IMR-90 (cell line): ENCODE measurements at regions of chr2 and their contacts with region 1.

Region 1: DNA sequence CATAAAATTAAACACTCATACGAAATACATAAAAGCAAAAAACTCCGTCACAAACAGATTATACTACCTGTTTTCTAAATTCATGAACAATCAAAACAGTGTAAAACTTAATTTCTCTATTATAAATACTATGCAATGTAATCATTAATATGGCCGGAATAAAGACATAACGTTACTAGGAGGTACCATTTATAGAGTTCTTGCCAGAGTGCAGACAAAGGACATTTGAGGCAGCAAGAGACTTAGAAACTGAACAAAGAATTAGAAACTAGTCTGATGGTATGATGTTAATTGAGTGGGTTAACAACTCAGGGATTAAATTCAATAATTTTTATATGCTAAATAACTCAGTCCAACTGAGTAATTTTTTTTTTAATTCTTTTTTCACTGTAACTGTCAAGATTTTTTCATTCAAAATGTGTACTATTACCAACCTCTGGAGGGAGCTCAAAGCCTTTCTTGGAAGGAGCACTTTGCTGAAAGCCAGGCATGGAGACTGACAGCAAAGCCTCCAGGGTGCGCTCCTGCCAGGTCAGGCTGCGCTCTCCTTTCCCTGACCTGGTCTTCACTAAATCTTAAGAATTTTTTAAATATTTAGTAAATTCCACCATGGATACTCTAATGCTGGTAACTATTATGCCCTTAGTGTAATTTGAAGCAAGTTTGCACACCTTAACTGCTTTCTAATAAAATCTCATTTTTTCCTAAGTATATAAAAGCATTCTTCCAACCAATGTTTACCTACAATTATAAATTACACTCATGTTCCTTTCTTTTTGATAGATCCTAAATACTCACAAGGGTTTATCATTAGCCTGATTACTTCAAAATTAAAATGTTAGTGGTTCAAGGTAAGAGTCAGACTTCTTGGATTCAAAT is 34.1 kb downstream of the WDR35 start:
- DNase-seq: peak; percentile 77
- ATAC-seq: peak; percentile 99
- H3K4me3 ChIP-seq: no peak overlapping the region
- H3K27ac ChIP-seq: no peak overlapping the region
- H3K4me1 ChIP-seq: no peaks in the 10 kb centered on the region
- H3K27me3 ChIP-seq: no peaks in the 10 kb centered on the region
- CTCF ChIP-seq: peak; percentile 99
- POLR2A ChIP-seq: 0 out of 2 replicates have a peak, but pooled peaks have one; percentile 37
- RAD21 ChIP-seq: peak; percentile 93

Region 2: GRCh38 chr2:19863303-19864041 is 92.3 kb before region 1 on chr2:
- CTCF ChIA-PET with region 1: no interaction called
- POLR2A ChIA-PET with region 1: no interaction called
- dilution Hi-C with region 1: no loop called
- in situ Hi-C with region 1: no loop called
- intact Hi-C with region 1: no loop called
- DNase-seq: peak; percentile 45
- ATAC-seq: peak; percentile 76
- H3K4me3 ChIP-seq: no peak overlapping the region
- H3K27ac ChIP-seq: no peak overlapping the region
- H3K4me1 ChIP-seq: peaks cover 14% of the 10 kb centered on the region
- H3K27me3 ChIP-seq: peaks cover 3% of the 10 kb centered on the region
- CTCF ChIP-seq: peak; percentile 83
- POLR2A ChIP-seq: no peak
- RAD21 ChIP-seq: peak; percentile 98

Region 3: DNA sequence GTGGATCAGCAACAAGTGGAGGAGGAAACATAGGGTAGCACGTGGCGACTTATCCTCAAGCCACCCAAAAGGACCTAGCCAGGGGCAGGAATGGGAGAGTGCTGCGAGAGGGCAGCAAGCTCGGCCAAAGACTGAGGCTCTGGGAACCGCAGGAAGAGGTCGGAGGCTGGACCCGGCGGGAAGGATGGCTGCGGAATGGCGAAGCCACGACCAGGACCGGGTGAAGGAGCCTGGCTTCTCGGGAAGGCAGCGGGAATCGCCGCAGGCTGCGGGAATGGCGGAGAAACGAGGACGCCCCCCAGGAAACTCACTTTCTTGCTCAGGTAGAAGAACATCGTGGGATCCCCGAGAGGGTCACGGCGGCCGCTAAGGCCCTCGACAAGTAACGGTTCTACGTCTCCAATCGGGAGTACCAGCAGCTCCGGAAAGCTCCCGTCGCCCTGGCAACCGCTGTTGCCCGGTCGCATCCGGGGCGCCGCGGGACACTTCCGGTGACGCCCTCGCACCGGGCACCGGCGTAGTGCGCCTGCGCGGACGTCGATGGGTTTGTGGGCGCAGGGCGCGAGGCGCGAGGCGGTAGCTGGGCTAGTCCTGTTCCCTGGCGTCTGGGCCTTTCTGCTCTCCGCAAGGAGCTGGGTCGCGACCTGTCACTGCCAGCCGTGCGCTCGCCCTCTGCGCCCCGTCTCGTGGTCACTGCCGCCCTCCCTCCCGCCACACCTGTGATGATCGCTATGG is 34.1 kb after region 1 on chr2 and contains the start of gene WDR35:
- CTCF ChIA-PET with region 1: no interaction called
- POLR2A ChIA-PET with region 1: no interaction called
- dilution Hi-C with region 1: no loop called
- in situ Hi-C with region 1: no loop called
- intact Hi-C with region 1: loop called (anchors 2 kb)
- DNase-seq: peak; percentile 79
- ATAC-seq: peak; percentile 90
- H3K4me3 ChIP-seq: peak within 1 kb of the TSS; percentile 95
- H3K27ac ChIP-seq: peak within 1 kb of the TSS; percentile 57
- H3K4me1 ChIP-seq: peaks cover 2% of the 10 kb centered on the region; the same call in 1 of the 2 replicates
- H3K27me3 ChIP-seq: no peaks in the 10 kb centered on the region
- CTCF ChIP-seq: no peak
- POLR2A ChIP-seq: peak; percentile 25; the same call in 1 of the 2 replicates
- RAD21 ChIP-seq: no peak
- total RNA-seq, gene WDR35: 8.1 and 12.2 TPM in 2 replicates

Region 4: DNA sequence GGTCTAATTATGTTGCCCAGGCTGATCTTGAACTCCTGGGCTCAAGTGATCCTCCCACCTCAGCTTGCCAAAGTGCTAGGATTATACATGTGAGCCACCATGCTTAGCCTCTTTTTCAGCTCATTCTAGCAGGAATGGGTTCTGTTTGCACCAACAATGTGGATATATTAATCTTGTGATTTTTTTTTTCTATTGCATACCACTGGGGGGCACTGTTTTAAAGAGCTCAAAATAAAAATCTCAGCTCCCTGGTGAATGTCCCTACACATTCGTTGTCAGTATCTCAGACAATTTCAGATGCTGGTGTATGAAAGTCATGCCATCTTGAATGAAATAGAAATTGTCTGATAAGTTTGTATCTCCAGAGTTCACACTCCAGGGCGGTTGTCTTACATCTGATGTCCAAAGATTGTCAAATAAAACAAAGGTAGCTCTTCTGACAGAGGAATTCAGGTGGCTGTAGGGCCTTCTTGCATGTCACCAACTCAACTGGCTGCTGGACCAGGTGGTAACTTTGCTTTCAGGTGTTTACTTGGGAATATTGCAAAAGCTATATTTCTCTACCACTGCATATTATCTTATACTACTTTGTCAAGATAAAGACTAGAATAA is 59.8 kb after region 1 on chr2:
- CTCF ChIA-PET with region 1: interaction called, 4 read pairs
- POLR2A ChIA-PET with region 1: no interaction called
- dilution Hi-C with region 1: no loop called
- in situ Hi-C with region 1: loop called (anchors 10 kb)
- intact Hi-C with region 1: loop called (anchors 1 kb)
- DNase-seq: peak; percentile 65
- ATAC-seq: peak; percentile 27; the same call in 1 of the 2 replicates
- H3K4me3 ChIP-seq: no peak overlapping the region
- H3K27ac ChIP-seq: no peak overlapping the region
- H3K4me1 ChIP-seq: peaks cover 3% of the 10 kb centered on the region
- H3K27me3 ChIP-seq: peaks cover 13% of the 10 kb centered on the region
- CTCF ChIP-seq: peak; percentile 74
- POLR2A ChIP-seq: no peak
- RAD21 ChIP-seq: peak; percentile 68

Region 5: GRCh38 chr2:20097879-20098714 is 142.3 kb after region 1 on chr2:
- CTCF ChIA-PET with region 1: interaction called, 3 read pairs
- POLR2A ChIA-PET with region 1: no interaction called
- dilution Hi-C with region 1: no loop called
- in situ Hi-C with region 1: loop called (anchors 5 kb)
- intact Hi-C with region 1: loop called (anchors 1 kb)
- DNase-seq: peak; percentile 85
- ATAC-seq: peak; percentile 85
- H3K4me3 ChIP-seq: no peak overlapping the region
- H3K27ac ChIP-seq: no peak overlapping the region
- H3K4me1 ChIP-seq: peaks cover 18% of the 10 kb centered on the region
- H3K27me3 ChIP-seq: no peaks in the 10 kb centered on the region
- CTCF ChIP-seq: peak; percentile 96
- POLR2A ChIP-seq: peak; percentile 52; the same call in 1 of the 2 replicates
- RAD21 ChIP-seq: peak; percentile 99

Region 6: GRCh38 chr2:20135631-20136050 is 179.9 kb after region 1 on chr2:
- CTCF ChIA-PET with region 1: no interaction called
- POLR2A ChIA-PET with region 1: interaction called, 20 read pairs
- dilution Hi-C with region 1: no loop called
- in situ Hi-C with region 1: no loop called
- intact Hi-C with region 1: no loop called
- DNase-seq: peak; percentile 61
- ATAC-seq: peak; percentile 85
- H3K4me3 ChIP-seq: no peak overlapping the region
- H3K27ac ChIP-seq: no peak overlapping the region
- H3K4me1 ChIP-seq: peaks cover 8% of the 10 kb centered on the region
- H3K27me3 ChIP-seq: peaks cover 13% of the 10 kb centered on the region
- CTCF ChIP-seq: peak; percentile 81
- POLR2A ChIP-seq: no peak
- RAD21 ChIP-seq: peak; percentile 78